ENCODE measurements at regions of chr7 and their contacts with region 1.

Region 1: GRCh38 chr7:22854158-22855048 is 31.8 kb upstream of the TOMM7 start:
- DNase-seq: peak; percentile 62 to 88
- H3K4me3 ChIP-seq: peak overlapping the region; percentile 58 to 81 (median 74)
- H3K27ac ChIP-seq: peak overlapping the region; percentile 88
- H3K4me1 ChIP-seq: peaks cover 0 to 18% (median 14%) of the 10 kb centered on the region in 4 experiments
- H3K27me3 ChIP-seq: no peaks in the 10 kb centered on the region; a peak in 1 of 7 replicates
- CTCF ChIP-seq: peak in 1 of 3 experiments; percentile 34; a peak in 2 of 4 replicates
- EP300 ChIP-seq: no peak
- POLR2A ChIP-seq: peak; percentile 69 to 73
- RAD21 ChIP-seq: 0 out of 4 replicates have a peak, but pooled peaks have one; percentile 17 to 38

Region 2: DNA sequence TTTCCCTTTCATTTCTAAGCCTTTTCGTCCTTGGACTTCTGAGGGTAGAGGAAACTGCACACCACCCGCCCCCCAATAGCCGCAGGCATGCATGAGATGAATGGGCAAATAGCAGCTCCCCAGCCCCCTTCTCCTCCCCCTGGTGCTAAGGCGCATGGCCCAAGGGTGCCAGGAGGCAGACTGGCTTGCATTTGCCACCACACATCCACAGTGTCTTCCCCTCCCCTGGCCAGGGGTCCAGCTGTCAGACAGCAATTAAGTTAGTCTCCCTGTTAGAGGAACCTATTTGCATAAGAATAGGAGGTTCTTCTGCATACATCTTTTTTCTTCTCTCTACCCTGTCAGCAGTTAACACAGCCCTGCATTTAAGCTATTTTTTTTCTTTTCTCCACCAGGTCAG is 52.0 kb before region 1 on chr7:
- CTCF ChIA-PET with region 1: no interaction called
- POLR2A ChIA-PET with region 1: interaction called, 10 read pairs
- DNase-seq: peak in 1 of 2 experiments; percentile 58
- H3K4me3 ChIP-seq: peak overlapping the region in 1 of 4 experiments; percentile 14; a peak in 2 of 8 replicates
- H3K27ac ChIP-seq: no peak overlapping the region
- H3K4me1 ChIP-seq: peaks cover 3 to 10% (median 10%) of the 10 kb centered on the region in 4 experiments
- H3K27me3 ChIP-seq: no peaks in the 10 kb centered on the region
- CTCF ChIP-seq: no peak
- EP300 ChIP-seq: no peak
- POLR2A ChIP-seq: no peak
- RAD21 ChIP-seq: no peak

Region 3: GRCh38 chr7:22811746-22812280 is 42.6 kb before region 1 on chr7:
- CTCF ChIA-PET with region 1: interaction called, 4 read pairs
- POLR2A ChIA-PET with region 1: interaction called, 11 read pairs
- DNase-seq: no peak
- H3K4me3 ChIP-seq: no peak overlapping the region
- H3K27ac ChIP-seq: 0 out of 2 replicates have a peak overlapping the region, but pooled peaks have one; percentile 26
- H3K4me1 ChIP-seq: peaks cover 0 to 24% (median 14%) of the 10 kb centered on the region in 4 experiments
- H3K27me3 ChIP-seq: no peaks in the 10 kb centered on the region
- CTCF ChIP-seq: no peak
- EP300 ChIP-seq: no peak
- POLR2A ChIP-seq: no peak
- RAD21 ChIP-seq: no peak

Region 4: GRCh38 chr7:22822486-22823141 is 31.8 kb before region 1 on chr7 and contains the start of gene TOMM7:
- CTCF ChIA-PET with region 1: interaction called, 12 read pairs
- POLR2A ChIA-PET with region 1: interaction called, 37 read pairs
- DNase-seq: peak; percentile 84 to 95
- H3K4me3 ChIP-seq: peak within 1 kb of the TSS; percentile 92 to 97 (median 94)
- H3K27ac ChIP-seq: peak within 1 kb of the TSS; percentile 74
- H3K4me1 ChIP-seq: peaks cover 0 to 12% (median 6%) of the 10 kb centered on the region in 4 experiments; a peak in 5 of 7 replicates
- H3K27me3 ChIP-seq: no peaks in the 10 kb centered on the region
- CTCF ChIP-seq: peak in 2 of 3 experiments; percentile 46 to 50; a peak in 2 of 4 replicates
- EP300 ChIP-seq: no peak
- POLR2A ChIP-seq: peak; percentile 69 to 89
- RAD21 ChIP-seq: peak in 1 of 2 experiments; percentile 13; a peak in 3 of 4 replicates
- total RNA-seq, gene TOMM7: 389 and 406 TPM in 2 replicates

Region 5: DNA sequence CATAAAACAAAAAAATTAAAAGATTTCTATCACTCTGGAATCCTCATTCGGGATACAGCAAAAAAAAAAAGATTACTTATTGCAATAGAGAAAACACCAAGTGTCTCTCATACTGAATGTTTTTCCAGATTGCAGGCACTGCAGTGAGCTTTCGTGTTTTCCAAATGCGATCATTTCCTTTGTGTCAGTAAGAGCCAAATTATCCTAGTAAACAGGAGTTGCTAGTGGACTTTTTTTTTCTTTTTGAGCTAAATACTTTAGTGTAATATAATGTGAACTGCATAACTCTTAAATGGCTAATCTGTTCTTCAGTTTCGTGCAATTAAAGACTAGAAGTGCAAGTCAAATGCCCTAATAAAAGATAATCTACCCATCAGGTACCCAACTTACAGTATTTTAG is 12.6 kb after region 1 on chr7:
- CTCF ChIA-PET with region 1: interaction called, 20 read pairs
- POLR2A ChIA-PET with region 1: interaction called, 125 read pairs
- DNase-seq: no peak
- H3K4me3 ChIP-seq: no peak overlapping the region
- H3K27ac ChIP-seq: no peak overlapping the region
- H3K4me1 ChIP-seq: peaks cover 0 to 8% (median 0%) of the 10 kb centered on the region in 4 experiments; a peak in 3 of 7 replicates
- H3K27me3 ChIP-seq: no peaks in the 10 kb centered on the region
- CTCF ChIP-seq: no peak
- EP300 ChIP-seq: no peak
- POLR2A ChIP-seq: no peak
- RAD21 ChIP-seq: no peak

Region 6: GRCh38 chr7:22944022-22944421 is 89.6 kb after region 1 on chr7:
- CTCF ChIA-PET with region 1: no interaction called
- POLR2A ChIA-PET with region 1: no interaction called
- DNase-seq: no peak
- H3K4me3 ChIP-seq: no peak overlapping the region
- H3K27ac ChIP-seq: no peak overlapping the region
- H3K4me1 ChIP-seq: peaks cover 0 to 8% (median 2%) of the 10 kb centered on the region in 4 experiments; a peak in 3 of 7 replicates
- H3K27me3 ChIP-seq: no peaks in the 10 kb centered on the region
- CTCF ChIP-seq: no peak
- EP300 ChIP-seq: no peak
- POLR2A ChIP-seq: no peak
- RAD21 ChIP-seq: no peak